B cell (primary cell): ENCODE measurements at regions of chr2 and their contacts with region 1.

Region 1: GRCh38 chr2:98026927-98027522 is 31.3 kb upstream of the TMEM131 start:
- DNase-seq: peak; percentile 84
- ATAC-seq: peak; percentile 77
- H3K4me3 ChIP-seq: peak overlapping the region in 4 of 5 experiments; percentile 7 to 58 (median 35)
- H3K4me3 Mint-ChIP-seq: peak overlapping the region; percentile 84
- H3K27ac ChIP-seq: peak overlapping the region; percentile 80 to 82
- H3K27ac Mint-ChIP-seq: peak overlapping the region; percentile 88
- H3K4me1 ChIP-seq: peaks cover 51 to 67% of the 10 kb centered on the region in 2 donors
- H3K4me1 Mint-ChIP-seq: peaks cover 52% of the 10 kb centered on the region
- H3K27me3 ChIP-seq: no peaks in the 10 kb centered on the region
- H3K27me3 Mint-ChIP-seq: no peaks in the 10 kb centered on the region
- CTCF ChIP-seq: no peak

Region 2: GRCh38 chr2:97950329-97951154 is 76.5 kb before region 1 on chr2:
- CTCF ChIA-PET with region 1: no interaction called
- POLR2A ChIA-PET with region 1: no interaction called
- intact Hi-C with region 1: no loop called
- DNase-seq: no peak
- ATAC-seq: no peak
- H3K4me3 ChIP-seq: no peak overlapping the region
- H3K4me3 Mint-ChIP-seq: peak overlapping the region; percentile 11
- H3K27ac ChIP-seq: no peak overlapping the region
- H3K27ac Mint-ChIP-seq: peak overlapping the region; percentile 33
- H3K4me1 ChIP-seq: peaks cover 28 to 54% of the 10 kb centered on the region in 2 donors
- H3K4me1 Mint-ChIP-seq: peaks cover 83% of the 10 kb centered on the region
- H3K27me3 ChIP-seq: no peaks in the 10 kb centered on the region
- H3K27me3 Mint-ChIP-seq: no peaks in the 10 kb centered on the region
- CTCF ChIP-seq: no peak

Region 3: DNA sequence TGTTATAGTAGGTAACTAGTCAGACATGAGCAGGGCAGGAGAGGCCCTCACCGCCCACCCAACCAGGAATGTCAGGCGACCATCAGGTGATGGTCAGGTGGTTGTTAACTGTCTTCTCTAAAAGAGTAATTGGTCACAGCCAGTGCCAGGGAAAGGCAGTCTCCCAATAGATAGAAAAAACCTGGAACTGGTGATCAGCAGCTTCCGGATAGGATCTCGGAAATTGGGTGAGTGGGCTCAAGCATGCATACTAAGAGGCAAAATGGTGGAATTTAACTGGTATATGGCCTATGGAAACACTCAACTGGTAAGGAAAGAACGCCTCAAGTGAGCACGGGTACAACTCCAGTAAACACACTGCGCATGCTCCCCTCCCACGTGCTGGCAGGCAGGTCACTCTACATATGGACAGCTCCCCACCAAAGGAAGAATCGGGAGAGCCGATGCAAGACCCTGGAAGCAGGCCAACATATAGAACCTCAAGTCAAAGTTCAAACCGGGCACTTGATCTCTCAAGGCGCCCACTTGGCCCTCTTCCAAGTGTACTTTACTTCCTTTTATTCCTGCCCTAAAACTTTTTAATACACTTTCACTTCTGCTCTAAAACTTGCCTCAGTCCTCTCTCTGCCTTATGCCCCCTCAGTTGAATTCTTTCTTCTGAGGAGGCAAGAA is 12.2 kb after region 1 on chr2:
- CTCF ChIA-PET with region 1: interaction called, 4 read pairs
- POLR2A ChIA-PET with region 1: no interaction called
- intact Hi-C with region 1: loop called (anchors 1 kb)
- DNase-seq: peak; percentile 74
- ATAC-seq: peak; percentile 43
- H3K4me3 ChIP-seq: no peak overlapping the region
- H3K4me3 Mint-ChIP-seq: peak overlapping the region; percentile 49
- H3K27ac ChIP-seq: no peak overlapping the region
- H3K27ac Mint-ChIP-seq: peak overlapping the region; percentile 37
- H3K4me1 ChIP-seq: peaks cover 16 to 21% of the 10 kb centered on the region in 2 donors
- H3K4me1 Mint-ChIP-seq: peaks cover 21% of the 10 kb centered on the region
- H3K27me3 ChIP-seq: no peaks in the 10 kb centered on the region
- H3K27me3 Mint-ChIP-seq: no peaks in the 10 kb centered on the region
- CTCF ChIP-seq: no peak

Region 4: GRCh38 chr2:98063291-98063854 is 36.3 kb after region 1 on chr2:
- CTCF ChIA-PET with region 1: no interaction called
- POLR2A ChIA-PET with region 1: no interaction called
- intact Hi-C with region 1: no loop called
- DNase-seq: no peak
- ATAC-seq: no peak
- H3K4me3 ChIP-seq: no peak overlapping the region
- H3K4me3 Mint-ChIP-seq: no peak overlapping the region
- H3K27ac ChIP-seq: no peak overlapping the region
- H3K27ac Mint-ChIP-seq: no peak overlapping the region
- H3K4me1 ChIP-seq: no peaks in the 10 kb centered on the region
- H3K4me1 Mint-ChIP-seq: no peaks in the 10 kb centered on the region
- H3K27me3 ChIP-seq: no peaks in the 10 kb centered on the region
- H3K27me3 Mint-ChIP-seq: no peaks in the 10 kb centered on the region
- CTCF ChIP-seq: no peak

Region 5: DNA sequence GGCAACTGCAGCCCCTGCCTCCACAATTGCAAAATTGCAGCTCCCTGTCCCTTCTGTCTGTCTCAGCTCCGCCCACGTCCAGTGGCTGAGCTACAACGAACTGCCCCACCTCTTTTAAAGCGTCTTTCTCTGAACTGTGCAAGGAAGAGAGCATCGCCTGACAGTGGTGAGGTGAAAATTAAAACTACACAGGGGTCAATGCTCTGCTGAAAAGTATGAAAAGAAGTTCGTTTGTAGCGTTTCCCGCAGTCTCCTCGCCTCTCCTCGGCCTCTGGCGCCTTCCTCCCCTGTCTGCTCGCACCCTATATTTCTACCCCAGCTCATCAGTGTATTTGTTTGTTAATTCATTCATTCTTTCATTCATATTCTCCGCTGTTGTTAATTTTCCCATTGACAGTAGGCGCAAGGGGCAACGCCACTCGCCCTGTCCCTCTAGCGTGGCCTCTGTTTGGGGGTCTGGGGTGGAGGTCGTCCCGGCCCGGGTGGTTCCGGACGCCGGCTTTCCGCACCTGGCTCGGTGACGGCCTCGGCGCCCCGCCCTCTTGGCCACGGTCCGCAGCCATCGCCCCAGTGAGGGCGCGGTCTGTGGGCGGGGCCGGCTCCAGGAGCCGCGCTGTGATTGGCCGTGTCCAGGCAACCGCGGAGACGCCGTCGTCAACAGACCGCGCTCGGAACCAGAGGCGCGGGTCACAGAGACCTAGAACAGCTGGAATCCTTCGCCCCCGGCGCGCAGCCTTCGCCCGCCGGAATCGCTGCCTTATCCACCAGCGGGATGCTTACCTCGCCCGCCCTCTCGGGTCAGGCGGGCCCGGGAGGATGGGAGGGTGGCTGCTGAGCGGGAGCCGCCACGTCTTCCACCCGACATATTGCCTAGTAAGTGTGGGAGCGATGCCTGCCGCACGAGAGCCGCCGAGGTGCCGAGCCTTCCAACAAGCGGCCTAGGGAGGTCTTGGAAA is 59.7 kb after region 1 on chr2 and contains the start of gene VWA3B:
- CTCF ChIA-PET with region 1: no interaction called
- POLR2A ChIA-PET with region 1: no interaction called
- intact Hi-C with region 1: loop called (anchors 2 kb)
- DNase-seq: peak; percentile 90
- ATAC-seq: peak; percentile 92
- H3K4me3 ChIP-seq: peak within 1 kb of the TSS; percentile 55 to 67 (median 57)
- H3K4me3 Mint-ChIP-seq: peak within 1 kb of the TSS; percentile 79
- H3K27ac ChIP-seq: peak within 1 kb of the TSS; percentile 33 to 54
- H3K27ac Mint-ChIP-seq: peak within 1 kb of the TSS; percentile 75
- H3K4me1 ChIP-seq: peaks cover 29 to 49% of the 10 kb centered on the region in 2 donors
- H3K4me1 Mint-ChIP-seq: peaks cover 47% of the 10 kb centered on the region
- H3K27me3 ChIP-seq: no peaks in the 10 kb centered on the region
- H3K27me3 Mint-ChIP-seq: no peaks in the 10 kb centered on the region
- CTCF ChIP-seq: no peak
- total RNA-seq, gene VWA3B: not detected in 2 replicates

Region 6: DNA sequence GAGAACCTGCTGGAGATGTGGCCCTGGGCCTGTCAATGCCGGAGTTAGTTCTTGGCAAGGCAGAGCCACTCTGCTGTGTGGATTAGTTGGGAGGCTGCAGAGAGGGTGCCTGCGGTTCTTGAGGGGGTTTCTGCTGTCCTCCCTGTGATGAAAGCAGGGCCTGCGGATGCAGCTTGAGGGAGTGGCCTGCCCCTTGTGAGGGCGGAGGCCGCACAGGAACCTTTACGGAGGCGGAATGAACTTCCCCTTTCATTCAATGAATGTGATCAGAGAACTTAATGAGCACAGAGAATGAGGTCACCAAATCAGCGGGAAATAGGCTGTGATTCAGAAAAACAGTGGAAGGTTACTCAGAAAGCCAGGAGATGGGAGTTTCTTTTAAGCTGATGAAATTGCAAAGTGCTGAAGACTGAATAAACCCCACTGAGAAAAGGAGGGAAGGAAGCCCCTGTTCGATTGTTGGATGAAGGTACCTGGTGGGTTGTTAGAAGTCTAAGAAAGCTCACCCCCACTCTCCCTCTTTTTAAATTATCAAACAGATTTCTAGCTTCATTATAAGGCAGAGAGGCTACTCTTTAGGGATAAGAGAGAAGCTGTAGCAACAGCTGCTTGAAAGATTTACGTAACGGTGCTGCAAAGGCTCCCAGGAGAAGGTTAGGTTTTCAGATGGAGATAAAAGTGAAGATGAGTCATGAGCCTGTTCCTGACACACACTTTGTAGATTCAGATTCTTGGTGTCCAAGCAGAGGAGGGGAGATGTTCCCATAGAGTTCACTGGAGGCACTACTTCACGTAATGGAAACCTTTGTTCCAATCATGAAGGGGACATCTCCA is 107.4 kb after region 1 on chr2:
- CTCF ChIA-PET with region 1: no interaction called
- POLR2A ChIA-PET with region 1: no interaction called
- intact Hi-C with region 1: loop called (anchors 1 kb)
- DNase-seq: peak; percentile 92
- ATAC-seq: peak; percentile 98
- H3K4me3 ChIP-seq: no peak overlapping the region
- H3K4me3 Mint-ChIP-seq: peak overlapping the region; percentile 32
- H3K27ac ChIP-seq: peak overlapping the region in 1 of 2 donors; percentile 31
- H3K27ac Mint-ChIP-seq: peak overlapping the region; percentile 4
- H3K4me1 ChIP-seq: peaks cover 16 to 21% of the 10 kb centered on the region in 2 donors
- H3K4me1 Mint-ChIP-seq: peaks cover 23% of the 10 kb centered on the region
- H3K27me3 ChIP-seq: no peaks in the 10 kb centered on the region
- H3K27me3 Mint-ChIP-seq: no peaks in the 10 kb centered on the region
- CTCF ChIP-seq: no peak